Caco-2 (cell line): ENCODE measurements at regions of chr3 and their contacts with region 1.

Region 1: DNA sequence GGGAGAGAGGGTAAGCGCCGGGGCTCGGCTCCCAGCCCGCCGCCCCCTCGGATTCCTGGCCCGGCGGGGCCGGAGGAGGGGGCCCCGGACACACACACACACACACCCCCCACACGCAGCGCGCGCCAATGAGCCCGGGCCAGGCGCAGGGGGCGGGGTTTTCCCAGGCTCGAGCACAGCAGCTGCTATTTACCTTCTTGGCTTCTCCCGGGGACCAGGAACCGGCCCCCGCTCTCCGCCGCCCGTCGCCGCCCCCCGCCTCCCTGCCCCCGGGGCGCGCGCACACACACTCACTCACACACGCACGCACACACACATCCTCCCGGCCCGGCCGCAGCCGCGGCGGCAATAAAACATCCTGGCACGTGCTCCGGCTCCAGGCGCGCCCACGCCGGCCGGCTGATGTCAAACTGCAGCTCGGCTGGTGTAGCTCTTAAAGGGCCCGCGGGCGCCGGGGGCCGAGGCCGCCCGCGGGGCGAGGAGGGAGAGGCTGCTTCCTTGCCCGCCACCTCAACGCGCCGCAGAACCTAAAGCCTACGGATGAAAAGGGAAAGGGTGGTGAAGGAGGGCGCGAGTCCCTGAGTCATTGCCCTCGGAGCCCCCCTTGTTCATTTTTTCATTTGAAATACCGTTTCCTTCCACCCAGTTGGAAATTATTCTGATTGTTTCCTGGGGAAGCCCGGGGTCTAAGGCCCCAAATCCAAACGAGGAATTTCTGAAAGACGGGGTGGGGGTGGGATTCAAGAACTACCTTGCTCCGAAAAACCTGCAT is 1.0 kb upstream of the HES1 start:
- DNase-seq: peak; percentile 98
- H3K4me3 ChIP-seq: peak overlapping the region; percentile 61
- H3K4me3 Mint-ChIP-seq: peak overlapping the region; percentile 88
- H3K27ac Mint-ChIP-seq: peak overlapping the region; percentile 41
- H3K4me1 ChIP-seq: peaks cover 37% of the 10 kb centered on the region
- H3K4me1 Mint-ChIP-seq: peaks cover 32% of the 10 kb centered on the region
- H3K27me3 ChIP-seq: no peaks in the 10 kb centered on the region
- H3K27me3 Mint-ChIP-seq: no peaks in the 10 kb centered on the region
- CTCF ChIP-seq: no peak

Region 2: GRCh38 chr3:193780810-193781472 is 354.0 kb before region 1 on chr3:
- CTCF ChIA-PET with region 1: interaction called, 10 read pairs
- POLR2A ChIA-PET with region 1: interaction called, 12 read pairs
- intact Hi-C with region 1: loop called (anchors 1 kb)
- DNase-seq: peak; percentile 80 to 87
- H3K4me3 ChIP-seq: no peak overlapping the region
- H3K4me3 Mint-ChIP-seq: peak overlapping the region; percentile 4
- H3K27ac Mint-ChIP-seq: peak overlapping the region; percentile 98
- H3K4me1 ChIP-seq: peaks cover 76% of the 10 kb centered on the region
- H3K4me1 Mint-ChIP-seq: peaks cover 63% of the 10 kb centered on the region
- H3K27me3 ChIP-seq: no peaks in the 10 kb centered on the region
- H3K27me3 Mint-ChIP-seq: no peaks in the 10 kb centered on the region
- CTCF ChIP-seq: peak; percentile 81 to 89

Region 3: DNA sequence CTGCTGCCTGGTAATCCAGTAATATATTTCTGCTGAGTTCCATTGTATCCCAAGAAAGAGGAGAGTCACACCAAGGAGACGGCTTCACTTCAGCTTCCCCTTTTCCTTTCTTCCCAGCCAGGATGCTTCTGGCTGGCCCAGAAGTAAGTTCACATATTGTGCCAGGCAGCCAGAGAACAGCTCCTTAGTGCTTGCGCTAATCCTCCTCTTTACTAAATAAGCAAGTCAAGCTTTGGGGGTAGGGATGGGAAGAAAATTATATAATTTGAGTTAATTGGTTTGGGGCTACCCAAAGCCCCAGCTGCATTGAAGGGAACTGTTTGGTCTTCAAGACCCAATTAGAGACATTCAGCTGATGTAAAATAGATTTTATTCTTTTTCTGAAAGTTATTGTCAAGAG is 217.8 kb before region 1 on chr3:
- CTCF ChIA-PET with region 1: interaction called, 3 read pairs
- POLR2A ChIA-PET with region 1: interaction called, 17 read pairs
- intact Hi-C with region 1: loop called (anchors 1 kb)
- DNase-seq: no peak
- H3K4me3 ChIP-seq: no peak overlapping the region
- H3K4me3 Mint-ChIP-seq: no peak overlapping the region
- H3K27ac Mint-ChIP-seq: peak overlapping the region; percentile 65
- H3K4me1 ChIP-seq: peaks cover 55% of the 10 kb centered on the region
- H3K4me1 Mint-ChIP-seq: peaks cover 46% of the 10 kb centered on the region
- H3K27me3 ChIP-seq: no peaks in the 10 kb centered on the region
- H3K27me3 Mint-ChIP-seq: no peaks in the 10 kb centered on the region
- CTCF ChIP-seq: no peak

Region 4: DNA sequence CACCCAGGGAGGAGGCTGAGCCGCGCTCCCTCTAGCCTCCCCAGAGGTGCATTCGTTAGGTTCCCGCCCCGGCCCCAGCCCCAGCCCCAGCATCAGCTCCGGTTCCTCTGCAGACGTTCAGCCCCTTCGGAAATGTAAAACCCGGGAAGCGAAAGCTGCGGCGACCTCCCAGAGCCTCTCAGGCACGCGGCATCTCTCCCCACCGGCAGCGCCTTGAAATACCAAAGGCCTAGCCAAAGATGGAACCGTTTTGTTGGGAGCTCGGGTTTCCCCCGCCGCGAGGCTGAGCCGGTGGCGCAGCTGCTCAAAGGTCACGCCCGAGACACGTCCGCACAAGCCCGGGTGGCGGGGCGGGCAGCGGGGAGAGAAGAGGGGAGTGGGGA is 76.8 kb before region 1 on chr3:
- CTCF ChIA-PET with region 1: interaction called, 4 read pairs
- POLR2A ChIA-PET with region 1: interaction called, 11 read pairs
- intact Hi-C with region 1: loop called (anchors 2 kb)
- DNase-seq: peak; percentile 83 to 87
- H3K4me3 ChIP-seq: peak overlapping the region; percentile 28
- H3K4me3 Mint-ChIP-seq: peak overlapping the region; percentile 75
- H3K27ac Mint-ChIP-seq: peak overlapping the region; percentile 47
- H3K4me1 ChIP-seq: peaks cover 54% of the 10 kb centered on the region
- H3K4me1 Mint-ChIP-seq: peaks cover 36% of the 10 kb centered on the region
- H3K27me3 ChIP-seq: no peaks in the 10 kb centered on the region
- H3K27me3 Mint-ChIP-seq: no peaks in the 10 kb centered on the region
- CTCF ChIP-seq: no peak

Region 5: GRCh38 chr3:194112120-194113106 is 22.5 kb before region 1 on chr3:
- CTCF ChIA-PET with region 1: no interaction called
- POLR2A ChIA-PET with region 1: interaction called, 9 read pairs
- intact Hi-C with region 1: loop called (anchors 1 kb)
- DNase-seq: peak; percentile 90 to 93
- H3K4me3 ChIP-seq: peak overlapping the region; percentile 25
- H3K4me3 Mint-ChIP-seq: peak overlapping the region; percentile 74
- H3K27ac Mint-ChIP-seq: peak overlapping the region; percentile 93
- H3K4me1 ChIP-seq: peaks cover 46% of the 10 kb centered on the region
- H3K4me1 Mint-ChIP-seq: peaks cover 35% of the 10 kb centered on the region
- H3K27me3 ChIP-seq: no peaks in the 10 kb centered on the region
- H3K27me3 Mint-ChIP-seq: no peaks in the 10 kb centered on the region
- CTCF ChIP-seq: no peak

Region 6: DNA sequence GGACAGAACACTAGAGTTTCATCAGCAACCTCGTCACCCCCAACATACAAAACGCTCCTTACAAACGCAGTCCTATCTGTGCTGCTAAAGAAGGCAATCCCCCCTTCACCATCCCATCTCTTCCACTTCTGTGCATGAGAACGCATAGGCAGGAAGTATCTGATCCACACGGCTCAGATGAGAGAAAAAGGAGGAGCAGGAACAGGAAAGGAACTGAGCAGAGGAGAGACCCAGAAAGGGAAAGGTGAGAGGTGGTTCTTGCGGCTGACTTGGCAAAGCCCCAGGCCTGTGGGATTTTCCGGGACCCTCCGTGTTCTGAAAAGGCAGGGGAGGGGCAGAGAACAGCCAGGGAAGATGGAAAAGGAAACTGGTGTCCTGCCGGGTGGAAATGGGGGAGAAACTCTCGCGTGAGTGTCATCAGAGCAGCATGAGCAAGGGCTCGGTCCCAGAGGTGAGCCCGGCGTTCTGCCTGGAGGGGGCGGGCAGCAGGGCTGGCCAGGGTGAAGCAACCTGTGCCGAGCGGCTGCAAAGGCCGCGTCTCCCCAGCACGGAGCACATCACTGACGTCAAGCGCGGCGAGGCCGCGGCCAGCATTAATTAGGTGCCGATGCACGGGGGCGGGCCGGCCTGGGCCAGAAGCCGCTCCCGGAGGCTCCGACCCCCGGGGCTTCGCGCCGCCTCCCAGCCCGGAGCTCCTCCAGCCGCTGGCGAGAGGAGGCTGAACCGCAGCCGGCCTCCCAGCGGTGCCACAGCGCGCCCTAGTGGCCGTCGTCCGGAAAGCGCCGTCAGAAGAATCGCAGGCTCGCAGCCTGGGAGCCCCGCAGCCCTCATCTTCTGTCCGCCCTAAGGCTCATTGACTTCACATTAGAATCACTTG is 180.4 kb after region 1 on chr3:
- CTCF ChIA-PET with region 1: interaction called, 47 read pairs
- POLR2A ChIA-PET with region 1: interaction called, 7 read pairs
- intact Hi-C with region 1: loop called (anchors 1 kb)
- DNase-seq: peak; percentile 92 to 95
- H3K4me3 ChIP-seq: peak overlapping the region; percentile 51
- H3K4me3 Mint-ChIP-seq: peak overlapping the region; percentile 85
- H3K27ac Mint-ChIP-seq: peak overlapping the region; percentile 93
- H3K4me1 ChIP-seq: peaks cover 41% of the 10 kb centered on the region
- H3K4me1 Mint-ChIP-seq: peaks cover 49% of the 10 kb centered on the region
- H3K27me3 ChIP-seq: no peaks in the 10 kb centered on the region
- H3K27me3 Mint-ChIP-seq: no peaks in the 10 kb centered on the region
- CTCF ChIP-seq: peak; percentile 87 to 95